ENCODE measurements at regions of chr1 and their contacts with region 1.

Region 1: DNA sequence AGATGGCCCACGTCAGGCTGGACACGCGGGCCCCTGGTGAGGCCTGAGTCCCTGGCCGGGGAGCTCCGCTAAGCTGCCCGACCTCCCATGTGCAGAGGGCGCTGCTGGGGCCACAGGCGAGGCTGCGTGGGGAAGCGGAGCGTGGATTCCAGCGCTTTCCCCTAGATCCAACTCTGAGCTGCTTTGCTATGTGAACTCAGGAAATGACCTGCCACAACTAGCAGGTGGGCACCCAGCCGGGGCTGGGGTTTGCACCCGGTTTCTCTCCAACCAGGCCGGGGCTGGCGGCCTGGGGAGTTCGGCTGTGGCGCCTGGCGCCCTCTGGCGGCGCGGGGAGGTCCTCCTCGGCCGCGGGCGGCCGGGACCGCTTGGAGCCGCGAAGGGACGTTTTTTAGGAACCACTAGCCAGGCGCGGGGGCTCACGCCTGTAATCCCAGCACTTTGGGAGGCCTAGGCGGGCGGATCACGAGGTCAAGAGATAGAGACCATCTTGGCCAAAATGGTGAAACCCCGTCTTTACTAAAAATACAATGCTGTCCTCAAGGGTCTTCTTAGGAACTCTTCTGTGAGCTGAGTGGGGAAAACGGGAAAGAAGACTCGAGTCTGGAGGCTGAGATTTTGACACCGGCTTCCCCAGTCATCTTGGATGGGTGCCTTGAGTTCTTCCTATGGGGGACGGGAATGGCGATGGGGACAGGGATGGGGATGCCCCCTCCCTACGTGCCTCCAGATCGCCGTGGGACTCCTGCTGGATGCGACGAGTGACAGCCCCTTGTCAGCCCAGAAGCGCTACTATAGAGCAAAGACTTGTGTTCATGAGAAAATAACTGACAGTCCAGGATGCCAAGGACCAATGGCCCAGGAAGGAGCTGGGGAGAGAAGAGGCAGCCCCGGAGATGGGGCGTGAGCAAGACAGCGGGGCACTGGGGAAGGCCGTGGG is 12.6 kb downstream of the PYCR2 start:
- DNase-seq: peak; percentile 84
- ATAC-seq: peak; percentile 82
- H3K4me3 Mint-ChIP-seq: no peak overlapping the region
- H3K27ac Mint-ChIP-seq: no peak overlapping the region
- H3K4me1 Mint-ChIP-seq: peaks cover 43% of the 10 kb centered on the region
- H3K27me3 Mint-ChIP-seq: peaks cover 12% of the 10 kb centered on the region
- CTCF ChIP-seq: peak; percentile 93

Region 2: DNA sequence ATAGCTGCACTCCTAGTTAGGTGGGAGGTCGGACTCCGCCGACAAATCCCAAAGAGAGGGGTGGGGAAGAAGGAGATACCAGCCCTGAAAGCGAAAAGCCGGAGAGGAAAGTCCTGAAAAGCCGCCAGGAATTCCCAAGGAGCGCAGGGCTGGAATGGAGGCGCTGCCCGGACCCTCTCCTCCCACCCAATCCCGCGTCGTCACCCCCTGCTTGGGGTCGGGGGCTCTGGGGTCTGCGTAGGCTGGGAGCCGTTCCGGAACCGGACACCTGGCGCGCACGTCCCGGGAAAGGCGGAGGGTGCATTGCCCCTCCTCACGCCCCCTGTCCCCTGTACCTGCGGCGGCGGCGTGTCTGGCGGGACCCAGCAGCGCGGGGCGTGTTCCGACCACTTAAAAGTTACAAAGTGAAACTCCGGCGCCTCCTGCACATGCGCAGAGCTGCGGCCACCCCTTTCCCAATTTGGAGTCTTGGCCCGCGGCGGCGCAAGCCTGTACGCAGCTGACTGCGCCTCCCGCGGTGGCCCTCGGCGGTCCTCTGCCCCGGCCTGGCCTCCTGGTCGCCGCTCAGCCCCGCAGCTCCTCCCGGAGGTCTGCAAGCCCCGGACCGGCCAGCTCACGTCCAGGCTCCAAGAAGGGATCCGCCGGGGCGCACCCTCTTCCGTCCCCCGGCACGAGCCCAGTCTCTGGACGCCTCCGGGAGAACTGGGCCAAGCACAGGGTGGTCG is 29.3 kb before region 1 on chr1 and contains the start of gene TMEM63A:
- CTCF ChIA-PET with region 1: interaction called, 94 read pairs
- POLR2A ChIA-PET with region 1: interaction called, 6 read pairs
- DNase-seq: peak; percentile 94
- ATAC-seq: peak; percentile 30
- H3K4me3 Mint-ChIP-seq: peak within 1 kb of the TSS; percentile 77
- H3K27ac Mint-ChIP-seq: peak within 1 kb of the TSS; percentile 85
- H3K4me1 Mint-ChIP-seq: peaks cover 54% of the 10 kb centered on the region
- H3K27me3 Mint-ChIP-seq: no peaks in the 10 kb centered on the region; the same call in 1 of the 2 replicates
- CTCF ChIP-seq: no peak
- total RNA-seq, gene TMEM63A: 61.1 to 91.7 TPM (median 69.3 TPM) in 3 replicates

Region 3: GRCh38 chr1:225888898-225889601 is 22.4 kb before region 1 on chr1 and contains the start of gene LEFTY1:
- CTCF ChIA-PET with region 1: interaction called, 21 read pairs
- POLR2A ChIA-PET with region 1: no interaction called
- DNase-seq: peak; percentile 42
- ATAC-seq: peak; percentile 50
- H3K4me3 Mint-ChIP-seq: peak within 1 kb of the TSS; percentile 69
- H3K27ac Mint-ChIP-seq: peak within 1 kb of the TSS; percentile 78
- H3K4me1 Mint-ChIP-seq: peaks cover 43% of the 10 kb centered on the region
- H3K27me3 Mint-ChIP-seq: no peaks in the 10 kb centered on the region; the same call in 1 of the 2 replicates
- CTCF ChIP-seq: no peak
- total RNA-seq, gene LEFTY1: 47.0 to 52.9 TPM (median 49.0 TPM) in 3 replicates

Region 4: DNA sequence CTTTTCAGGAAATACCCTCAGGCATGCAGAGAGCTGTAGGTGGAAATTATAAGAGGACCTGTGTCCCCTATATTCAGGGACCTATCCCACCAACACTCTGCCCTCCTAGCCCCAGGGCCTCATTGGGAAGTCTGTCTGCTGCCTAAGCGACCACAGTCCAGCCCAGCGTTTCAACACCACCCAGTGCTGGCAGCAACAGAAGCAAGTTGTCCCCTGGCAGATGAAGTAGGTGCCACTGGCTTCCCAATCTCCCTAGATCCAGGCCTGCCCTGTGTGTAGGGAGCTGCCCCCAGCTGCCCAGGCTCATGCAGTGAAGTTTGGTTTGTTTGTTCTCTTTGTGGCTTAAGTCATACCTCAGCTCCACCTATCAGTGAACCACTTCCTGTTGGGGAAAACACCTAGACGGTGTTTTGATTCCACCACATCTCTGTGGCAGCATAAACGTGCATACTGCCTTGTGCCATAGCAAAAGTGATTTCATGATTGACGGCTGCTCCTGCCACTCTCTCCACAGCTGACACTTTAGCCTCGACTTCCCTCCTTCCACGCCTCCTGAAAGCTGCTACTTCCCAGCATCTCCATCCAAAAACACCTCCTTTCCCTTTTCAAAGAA is 14.4 kb before region 1 on chr1:
- CTCF ChIA-PET with region 1: interaction called, 11 read pairs
- POLR2A ChIA-PET with region 1: no interaction called
- DNase-seq: no peak
- ATAC-seq: no peak
- H3K4me3 Mint-ChIP-seq: no peak overlapping the region
- H3K27ac Mint-ChIP-seq: no peak overlapping the region
- H3K4me1 Mint-ChIP-seq: peaks cover 43% of the 10 kb centered on the region
- H3K27me3 Mint-ChIP-seq: peaks cover 11% of the 10 kb centered on the region; the same call in 1 of the 2 replicates
- CTCF ChIP-seq: no peak

Region 5: GRCh38 chr1:225923692-225924555 is 12.5 kb after region 1 on chr1 and contains the start of gene PYCR2:
- CTCF ChIA-PET with region 1: interaction called, 16 read pairs
- POLR2A ChIA-PET with region 1: no interaction called
- DNase-seq: peak; percentile 95
- ATAC-seq: peak; percentile 95
- H3K4me3 Mint-ChIP-seq: peak within 1 kb of the TSS; percentile 92
- H3K27ac Mint-ChIP-seq: peak within 1 kb of the TSS; percentile 84
- H3K4me1 Mint-ChIP-seq: peaks cover 23% of the 10 kb centered on the region
- H3K27me3 Mint-ChIP-seq: no peaks in the 10 kb centered on the region
- CTCF ChIP-seq: no peak
- total RNA-seq, gene PYCR2: 81.5 to 90.3 TPM (median 86.0 TPM) in 3 replicates

Region 6: GRCh38 chr1:225944951-225945350 is 33.5 kb after region 1 on chr1:
- CTCF ChIA-PET with region 1: interaction called, 13 read pairs
- POLR2A ChIA-PET with region 1: no interaction called
- DNase-seq: no peak
- ATAC-seq: no peak
- H3K4me3 Mint-ChIP-seq: no peak overlapping the region
- H3K27ac Mint-ChIP-seq: peak overlapping the region; percentile 93
- H3K4me1 Mint-ChIP-seq: peaks cover 86% of the 10 kb centered on the region
- H3K27me3 Mint-ChIP-seq: peaks cover 94% of the 10 kb centered on the region
- CTCF ChIP-seq: no peak

Region 7: DNA sequence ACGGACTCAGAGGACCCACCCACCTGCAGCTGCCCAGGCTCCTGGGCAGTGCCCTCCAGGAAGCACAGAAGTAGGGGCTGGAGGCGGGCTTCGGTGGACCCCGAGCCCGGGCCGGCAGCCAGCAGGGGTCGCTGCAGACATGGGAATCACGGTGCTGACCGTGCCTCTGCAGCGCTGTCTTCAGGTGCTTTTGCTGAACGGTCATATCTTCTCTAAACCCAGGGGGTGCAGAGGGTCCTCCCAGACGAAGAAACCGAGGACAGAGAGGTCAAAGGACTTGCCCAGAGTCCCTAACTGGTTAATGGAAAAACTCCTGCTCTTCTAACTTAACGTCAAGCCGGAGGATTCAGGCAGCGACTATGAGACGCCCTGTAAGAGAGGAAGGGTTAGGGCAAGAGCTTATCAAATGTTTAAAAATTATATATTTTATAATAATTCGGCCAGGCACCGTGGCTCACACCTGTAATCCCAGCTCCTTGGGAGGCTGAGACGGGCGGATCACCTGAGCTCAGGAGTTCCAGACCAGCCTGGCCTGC is 51.0 kb after region 1 on chr1:
- CTCF ChIA-PET with region 1: interaction called, 12 read pairs
- POLR2A ChIA-PET with region 1: no interaction called
- DNase-seq: peak; percentile 91
- ATAC-seq: peak; percentile 98
- H3K4me3 Mint-ChIP-seq: no peak overlapping the region
- H3K27ac Mint-ChIP-seq: no peak overlapping the region
- H3K4me1 Mint-ChIP-seq: no peaks in the 10 kb centered on the region
- H3K27me3 Mint-ChIP-seq: peaks cover 37% of the 10 kb centered on the region
- CTCF ChIP-seq: peak; percentile 90

Measured in WTC11 (cell line).